WTC11 (cell line): ENCODE measurements at regions of chr2 and their contacts with region 1.

Region 1: GRCh38 chr2:85132834-85133637 is at the start of gene TCF7L1:
- DNase-seq: peak; percentile 93
- ATAC-seq: peak; percentile 78
- H3K4me3 Mint-ChIP-seq: peak within 1 kb of the TSS; percentile 83
- H3K27ac Mint-ChIP-seq: peak within 1 kb of the TSS; percentile 65
- H3K4me1 Mint-ChIP-seq: peaks cover 36% of the 10 kb centered on the region
- H3K27me3 Mint-ChIP-seq: peaks cover 3% of the 10 kb centered on the region
- CTCF ChIP-seq: peak; percentile 73
- total RNA-seq, gene TCF7L1: 104 to 108 TPM (median 106 TPM) in 3 replicates

Region 2: GRCh38 chr2:85066874-85067351 is 66.1 kb before region 1 on chr2:
- CTCF ChIA-PET with region 1: interaction called, 46 read pairs
- POLR2A ChIA-PET with region 1: interaction called, 3 read pairs
- DNase-seq: peak; percentile 93
- ATAC-seq: peak; percentile 86
- H3K4me3 Mint-ChIP-seq: peak overlapping the region; percentile 55
- H3K27ac Mint-ChIP-seq: no peak overlapping the region
- H3K4me1 Mint-ChIP-seq: peaks cover 25% of the 10 kb centered on the region
- H3K27me3 Mint-ChIP-seq: peaks cover 30% of the 10 kb centered on the region
- CTCF ChIP-seq: peak; percentile 66

Region 3: GRCh38 chr2:85143463-85144082 is 10.5 kb after region 1 on chr2:
- CTCF ChIA-PET with region 1: interaction called, 9 read pairs
- POLR2A ChIA-PET with region 1: interaction called, 10 read pairs
- DNase-seq: no peak
- ATAC-seq: no peak
- H3K4me3 Mint-ChIP-seq: no peak overlapping the region
- H3K27ac Mint-ChIP-seq: peak overlapping the region; percentile 97
- H3K4me1 Mint-ChIP-seq: peaks cover 72% of the 10 kb centered on the region
- H3K27me3 Mint-ChIP-seq: no peaks in the 10 kb centered on the region
- CTCF ChIP-seq: no peak

Region 4: DNA sequence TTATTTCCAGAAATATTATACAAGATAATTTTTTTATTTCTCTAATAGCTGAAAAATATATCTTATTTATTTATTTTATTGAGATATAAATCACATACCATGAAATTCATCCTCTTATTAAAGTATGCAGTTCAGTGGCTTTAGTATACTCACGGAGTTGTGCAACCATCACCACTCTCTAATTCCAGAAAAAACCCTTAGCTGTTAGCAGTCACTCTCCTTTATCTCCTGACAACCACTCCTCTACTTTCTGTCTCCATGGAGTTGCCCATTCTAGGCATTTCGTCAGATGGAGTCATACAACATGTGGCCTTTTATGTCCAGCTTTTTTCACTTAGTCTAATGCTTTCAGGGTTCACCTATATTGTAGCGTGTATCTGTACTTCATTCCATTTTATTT is 66.7 kb after region 1 on chr2:
- CTCF ChIA-PET with region 1: no interaction called
- POLR2A ChIA-PET with region 1: no interaction called
- DNase-seq: no peak
- ATAC-seq: no peak
- H3K4me3 Mint-ChIP-seq: no peak overlapping the region
- H3K27ac Mint-ChIP-seq: 0 out of 2 replicates have a peak overlapping the region, but pooled peaks have one; percentile 12
- H3K4me1 Mint-ChIP-seq: peaks cover 21% of the 10 kb centered on the region
- H3K27me3 Mint-ChIP-seq: no peaks in the 10 kb centered on the region
- CTCF ChIP-seq: no peak

Region 5: GRCh38 chr2:85215448-85216401 is 82.7 kb after region 1 on chr2:
- CTCF ChIA-PET with region 1: interaction called, 10 read pairs
- POLR2A ChIA-PET with region 1: interaction called, 4 read pairs
- DNase-seq: no peak
- ATAC-seq: peak; percentile 21
- H3K4me3 Mint-ChIP-seq: peak overlapping the region; percentile 48
- H3K27ac Mint-ChIP-seq: peak overlapping the region; percentile 93
- H3K4me1 Mint-ChIP-seq: peaks cover 75% of the 10 kb centered on the region
- H3K27me3 Mint-ChIP-seq: no peaks in the 10 kb centered on the region
- CTCF ChIP-seq: no peak

Region 6: GRCh38 chr2:85302121-85302520 is 169.1 kb after region 1 on chr2:
- CTCF ChIA-PET with region 1: interaction called, 25 read pairs
- POLR2A ChIA-PET with region 1: interaction called, 8 read pairs
- DNase-seq: no peak
- ATAC-seq: no peak
- H3K4me3 Mint-ChIP-seq: no peak overlapping the region
- H3K27ac Mint-ChIP-seq: no peak overlapping the region
- H3K4me1 Mint-ChIP-seq: peaks cover 11% of the 10 kb centered on the region
- H3K27me3 Mint-ChIP-seq: no peaks in the 10 kb centered on the region
- CTCF ChIP-seq: no peak